MCF 10A (cell line): ENCODE measurements at regions of chr20 and their contacts with region 1.

Region 1: DNA sequence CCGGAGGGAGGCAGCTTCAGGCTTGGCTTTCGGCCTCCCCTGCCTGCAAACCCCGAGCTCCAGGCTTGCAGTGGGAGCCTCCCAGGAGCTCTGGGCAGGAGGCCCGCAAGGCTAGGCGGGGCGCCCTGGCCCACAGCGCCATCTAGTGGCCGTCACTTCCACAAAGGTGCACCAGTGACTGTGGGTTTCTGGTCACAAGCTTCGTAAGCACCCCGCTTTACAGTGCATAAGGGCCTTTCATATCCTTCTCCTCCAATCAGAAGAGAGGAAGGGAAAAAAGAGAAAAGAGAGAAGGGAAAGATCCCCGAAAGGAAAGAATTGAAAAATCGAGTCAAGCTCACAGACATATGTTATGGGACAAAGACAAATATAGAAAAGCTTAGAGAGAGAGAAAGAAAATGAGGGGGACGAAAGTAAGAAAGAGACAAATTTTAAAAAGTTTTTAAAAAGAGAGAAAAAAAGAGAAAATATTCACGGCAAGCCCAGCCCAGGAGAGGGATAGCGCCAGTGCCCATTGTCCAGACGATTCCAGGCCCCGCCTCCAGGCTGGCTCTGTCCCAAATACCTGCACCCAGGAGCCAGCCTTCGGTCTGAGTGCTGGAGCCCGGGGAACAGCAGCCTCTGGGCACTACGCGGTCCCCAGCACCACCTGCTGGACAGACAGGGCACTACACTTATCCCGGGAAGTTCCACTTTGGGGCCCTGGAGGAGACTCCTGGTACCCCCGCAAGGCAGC is 207.1 kb downstream of the PREX1 start:
- DNase-seq: peak; percentile 90
- H3K4me3 Mint-ChIP-seq: peak overlapping the region; percentile 67
- H3K27ac Mint-ChIP-seq: peak overlapping the region; percentile 18
- H3K4me1 Mint-ChIP-seq: peaks cover 23% of the 10 kb centered on the region
- H3K27me3 Mint-ChIP-seq: no peaks in the 10 kb centered on the region
- CTCF ChIP-seq: peak; percentile 94

Region 2: GRCh38 chr20:47663333-47664067 is 957.2 kb before region 1 on chr20:
- CTCF ChIA-PET with region 1: interaction called, 103 read pairs
- POLR2A ChIA-PET with region 1: interaction called, 7 read pairs
- intact Hi-C with region 1: loop called (anchors 1 kb)
- DNase-seq: peak; percentile 81
- H3K4me3 Mint-ChIP-seq: no peak overlapping the region
- H3K27ac Mint-ChIP-seq: peak overlapping the region; percentile 46
- H3K4me1 Mint-ChIP-seq: peaks cover 14% of the 10 kb centered on the region
- H3K27me3 Mint-ChIP-seq: no peaks in the 10 kb centered on the region
- CTCF ChIP-seq: peak; percentile 90

Region 3: DNA sequence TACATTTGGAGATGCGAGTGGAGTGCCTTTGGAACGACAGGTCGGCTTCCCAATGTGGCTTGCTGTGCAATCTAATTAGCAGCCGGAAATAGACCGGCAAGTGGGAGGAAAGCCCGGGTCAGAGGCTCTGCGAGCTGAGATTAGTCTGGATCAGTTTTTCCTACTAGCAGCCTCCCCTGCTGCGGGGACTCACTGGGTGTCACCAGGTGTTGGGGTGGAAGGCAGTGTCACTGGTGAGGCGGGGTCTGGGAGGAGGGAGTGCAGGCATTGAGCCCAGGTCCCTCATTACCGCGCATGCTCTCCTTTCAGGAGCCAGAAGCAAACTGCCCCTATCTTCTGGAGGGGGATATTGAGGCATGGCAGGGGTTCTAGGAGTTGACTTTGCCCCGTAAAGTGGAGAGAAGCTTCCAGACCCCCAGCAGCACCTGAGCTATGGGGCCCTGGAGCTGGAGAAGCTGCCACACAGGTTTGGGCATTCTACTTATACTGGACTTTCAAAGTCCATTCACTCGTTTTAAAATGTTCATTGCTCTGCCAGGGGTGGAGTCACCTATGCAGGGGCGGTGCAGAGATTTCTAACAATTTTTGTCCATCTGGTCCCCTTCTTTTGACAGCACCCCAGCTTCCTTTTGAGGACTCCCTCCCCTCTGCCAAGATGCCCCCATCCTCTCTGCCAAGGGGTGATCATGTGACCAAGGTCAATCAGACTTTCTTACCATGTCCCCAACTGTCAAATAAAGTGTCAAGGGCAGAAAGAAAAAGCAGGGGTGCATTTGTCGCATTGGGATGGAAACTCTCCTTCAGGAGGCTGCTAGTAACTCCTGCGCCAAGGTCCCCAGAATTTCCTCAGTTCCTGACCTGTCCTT is 846.3 kb before region 1 on chr20:
- CTCF ChIA-PET with region 1: interaction called, 16 read pairs
- POLR2A ChIA-PET with region 1: no interaction called
- intact Hi-C with region 1: no loop called
- DNase-seq: no peak
- H3K4me3 Mint-ChIP-seq: no peak overlapping the region
- H3K27ac Mint-ChIP-seq: no peak overlapping the region
- H3K4me1 Mint-ChIP-seq: peaks cover 21% of the 10 kb centered on the region
- H3K27me3 Mint-ChIP-seq: no peaks in the 10 kb centered on the region
- CTCF ChIP-seq: no peak

Region 4: DNA sequence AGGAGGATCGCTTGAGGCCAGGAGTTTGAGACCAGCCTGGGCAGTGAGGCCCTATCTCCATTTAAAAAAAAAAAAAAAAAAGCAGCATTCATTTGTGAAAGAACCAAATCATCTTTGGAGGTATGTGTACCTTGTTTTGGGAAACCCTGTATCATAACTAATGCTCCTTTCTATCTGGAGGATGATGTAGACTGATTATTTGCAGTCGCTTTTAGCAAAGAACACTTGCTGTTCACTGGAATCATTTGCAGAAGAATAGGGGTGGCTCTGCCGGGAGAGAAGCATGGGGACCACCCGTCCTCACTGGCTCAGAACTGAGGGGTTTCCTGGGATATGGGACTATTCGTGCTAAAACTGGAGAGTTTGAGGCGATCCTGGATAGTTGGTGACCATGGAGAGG is 766.5 kb before region 1 on chr20:
- CTCF ChIA-PET with region 1: interaction called, 8 read pairs
- POLR2A ChIA-PET with region 1: interaction called, 6 read pairs
- intact Hi-C with region 1: loop called (anchors 2 kb)
- DNase-seq: no peak
- H3K4me3 Mint-ChIP-seq: no peak overlapping the region
- H3K27ac Mint-ChIP-seq: no peak overlapping the region
- H3K4me1 Mint-ChIP-seq: peaks cover 6% of the 10 kb centered on the region
- H3K27me3 Mint-ChIP-seq: no peaks in the 10 kb centered on the region
- CTCF ChIP-seq: no peak

Region 5: GRCh38 chr20:48131581-48131980 is 489.1 kb before region 1 on chr20:
- CTCF ChIA-PET with region 1: interaction called, 14 read pairs
- POLR2A ChIA-PET with region 1: no interaction called
- intact Hi-C with region 1: no loop called
- DNase-seq: no peak
- H3K4me3 Mint-ChIP-seq: no peak overlapping the region
- H3K27ac Mint-ChIP-seq: no peak overlapping the region
- H3K4me1 Mint-ChIP-seq: peaks cover 28% of the 10 kb centered on the region
- H3K27me3 Mint-ChIP-seq: peaks cover 3% of the 10 kb centered on the region
- CTCF ChIP-seq: no peak

Region 6: DNA sequence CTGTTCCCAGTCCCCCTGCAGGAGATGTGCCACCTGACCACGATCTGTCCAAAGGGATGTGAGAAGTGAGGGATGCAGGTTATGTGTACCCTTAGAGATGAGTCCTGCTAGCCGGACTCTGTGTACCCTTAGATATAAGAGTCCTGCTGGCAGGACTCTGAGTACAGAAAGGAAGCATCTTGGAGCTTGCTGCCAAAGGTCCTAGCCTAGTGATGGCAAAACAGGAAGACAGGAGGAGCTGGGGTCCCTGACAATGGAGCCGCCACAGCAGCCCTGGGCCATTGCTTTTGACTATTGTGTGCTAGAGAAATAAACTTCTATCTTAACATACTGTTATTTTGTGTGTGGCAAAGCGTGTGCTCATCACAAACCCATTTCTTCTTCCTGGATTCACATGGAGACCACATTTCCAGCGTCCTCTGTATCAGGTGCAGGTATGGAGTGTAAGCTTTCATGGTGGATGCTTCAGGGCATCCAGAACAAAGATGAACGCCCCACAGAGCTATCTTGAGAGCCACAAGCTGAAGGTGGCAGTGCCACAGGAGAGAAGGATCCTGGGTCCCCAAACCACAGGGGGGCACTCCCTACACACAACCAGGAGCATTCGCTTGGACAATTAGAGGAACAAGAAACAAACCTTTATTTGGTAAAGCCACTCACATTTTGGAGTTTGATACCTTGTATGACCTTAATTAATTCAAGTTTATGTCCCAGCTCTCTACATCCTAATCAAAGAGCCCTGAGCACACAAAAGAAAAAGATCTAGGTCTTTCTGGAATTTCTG is 199.3 kb before region 1 on chr20:
- CTCF ChIA-PET with region 1: interaction called, 11 read pairs
- POLR2A ChIA-PET with region 1: no interaction called
- intact Hi-C with region 1: loop called (anchors 10 kb)
- DNase-seq: peak; percentile 6
- H3K4me3 Mint-ChIP-seq: no peak overlapping the region
- H3K27ac Mint-ChIP-seq: no peak overlapping the region
- H3K4me1 Mint-ChIP-seq: no peaks in the 10 kb centered on the region
- H3K27me3 Mint-ChIP-seq: peaks cover 60% of the 10 kb centered on the region
- CTCF ChIP-seq: no peak

Region 7: GRCh38 chr20:48635433-48636310 is 15.0 kb after region 1 on chr20:
- CTCF ChIA-PET with region 1: interaction called, 26 read pairs
- POLR2A ChIA-PET with region 1: no interaction called
- intact Hi-C with region 1: no loop called
- DNase-seq: peak; percentile 51
- H3K4me3 Mint-ChIP-seq: no peak overlapping the region
- H3K27ac Mint-ChIP-seq: no peak overlapping the region
- H3K4me1 Mint-ChIP-seq: no peaks in the 10 kb centered on the region
- H3K27me3 Mint-ChIP-seq: peaks cover 31% of the 10 kb centered on the region
- CTCF ChIP-seq: peak; percentile 83